MCF 10A (cell line): ENCODE measurements at regions of chr17 and their contacts with region 1.

Region 1: GRCh38 chr17:40399185-40399584 is 18.5 kb downstream of the TOP2A start:
- DNase-seq: peak; percentile 61
- H3K4me3 Mint-ChIP-seq: no peak overlapping the region
- H3K27ac Mint-ChIP-seq: no peak overlapping the region
- H3K4me1 Mint-ChIP-seq: peaks cover 6% of the 10 kb centered on the region
- H3K27me3 Mint-ChIP-seq: no peaks in the 10 kb centered on the region
- CTCF ChIP-seq: peak; percentile 46

Region 2: DNA sequence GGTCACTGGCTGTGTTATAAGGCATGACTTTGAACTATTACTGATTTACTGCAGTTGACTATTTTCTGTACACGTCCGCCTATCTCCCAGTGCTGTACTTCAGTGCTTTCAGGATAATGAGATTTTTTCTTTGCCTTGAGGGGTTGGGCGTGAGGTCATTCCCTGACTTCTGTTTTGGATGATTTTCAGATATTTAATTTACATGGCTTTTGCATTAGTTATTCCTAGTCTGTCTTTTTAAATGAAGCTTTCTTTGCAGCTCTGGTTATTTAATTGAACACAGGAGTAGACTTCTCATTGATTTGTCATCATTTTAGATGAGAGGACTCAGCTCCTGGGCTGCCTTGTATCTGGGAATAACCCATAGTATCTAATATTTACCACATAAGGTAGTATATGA is 156.4 kb before region 1 on chr17:
- CTCF ChIA-PET with region 1: no interaction called
- POLR2A ChIA-PET with region 1: no interaction called
- intact Hi-C with region 1: no loop called
- DNase-seq: no peak
- H3K4me3 Mint-ChIP-seq: no peak overlapping the region
- H3K27ac Mint-ChIP-seq: no peak overlapping the region
- H3K4me1 Mint-ChIP-seq: peaks cover 14% of the 10 kb centered on the region
- H3K27me3 Mint-ChIP-seq: no peaks in the 10 kb centered on the region
- CTCF ChIP-seq: no peak

Region 3: GRCh38 chr17:40410082-40410481 is 10.9 kb after region 1 on chr17:
- CTCF ChIA-PET with region 1: interaction called, 26 read pairs
- POLR2A ChIA-PET with region 1: interaction called, 6 read pairs
- intact Hi-C with region 1: loop called (anchors 2 kb)
- DNase-seq: no peak
- H3K4me3 Mint-ChIP-seq: no peak overlapping the region
- H3K27ac Mint-ChIP-seq: peak overlapping the region; percentile 36
- H3K4me1 Mint-ChIP-seq: peaks cover 21% of the 10 kb centered on the region
- H3K27me3 Mint-ChIP-seq: no peaks in the 10 kb centered on the region
- CTCF ChIP-seq: no peak

Region 4: GRCh38 chr17:40464392-40464855 is 65.2 kb after region 1 on chr17:
- CTCF ChIA-PET with region 1: no interaction called
- POLR2A ChIA-PET with region 1: no interaction called
- intact Hi-C with region 1: no loop called
- DNase-seq: no peak
- H3K4me3 Mint-ChIP-seq: no peak overlapping the region
- H3K27ac Mint-ChIP-seq: no peak overlapping the region
- H3K4me1 Mint-ChIP-seq: no peaks in the 10 kb centered on the region
- H3K27me3 Mint-ChIP-seq: no peaks in the 10 kb centered on the region
- CTCF ChIP-seq: no peak